PC-9 (cell line): ENCODE measurements at regions of chr1 and their contacts with region 1.

Region 1: GRCh38 chr1:248906009-248906752 is at the start of gene PGBD2:
- DNase-seq: peak; percentile 66 to 91
- H3K4me3 ChIP-seq: peak within 1 kb of the TSS; percentile 74
- H3K27ac ChIP-seq: peak within 1 kb of the TSS; percentile 63
- H3K4me1 ChIP-seq: no peaks in the 10 kb centered on the region
- H3K27me3 ChIP-seq: 0 out of 2 replicates have a peak, but pooled peaks cover 1% of the 10 kb centered on the region
- CTCF ChIP-seq: peak; percentile 73
- total RNA-seq, gene PGBD2: 5.3 and 5.6 TPM in 2 replicates

Region 2: DNA sequence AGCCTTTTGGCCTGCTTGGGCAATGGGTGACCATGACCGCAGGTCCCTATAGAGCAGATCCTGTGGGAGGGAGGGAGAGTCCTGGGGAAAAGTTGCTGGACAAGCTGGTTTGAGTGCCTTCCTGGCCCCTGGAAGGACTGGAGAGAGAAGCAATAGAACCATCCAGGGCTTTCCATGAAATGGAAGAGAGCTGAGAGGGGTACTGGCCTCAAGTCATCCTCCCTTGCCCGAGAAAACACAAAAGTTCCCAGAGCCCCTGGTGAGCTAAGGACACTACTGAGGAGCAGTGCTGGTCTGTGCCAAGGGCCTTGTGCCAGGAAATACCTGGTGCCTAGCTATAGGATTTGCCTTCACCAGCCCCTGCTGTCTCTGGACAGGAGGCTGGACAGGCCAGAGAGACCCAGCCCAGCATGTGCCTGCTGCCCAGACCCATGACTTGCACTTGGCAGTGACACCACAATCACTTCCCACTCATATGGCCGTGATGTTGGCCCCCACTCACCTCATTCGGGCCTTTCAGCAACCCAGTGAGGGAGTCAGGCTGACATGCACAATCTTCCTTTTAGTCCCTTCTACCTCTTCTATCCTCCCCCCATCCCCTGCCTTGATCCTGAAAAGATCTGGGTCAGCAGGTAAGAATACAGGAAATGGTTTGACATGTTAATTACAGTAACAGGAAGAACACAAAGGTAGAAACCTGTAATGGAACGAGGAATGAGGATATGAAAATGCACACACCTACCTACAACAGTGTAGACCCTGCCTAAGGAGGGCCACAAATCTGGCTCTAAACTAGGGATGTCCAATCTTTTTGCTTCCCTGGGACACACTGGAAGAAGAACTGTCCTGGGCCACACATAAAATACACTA is 87.4 kb before region 1 on chr1:
- CTCF ChIA-PET with region 1: no interaction called
- POLR2A ChIA-PET with region 1: no interaction called
- intact Hi-C with region 1: no loop called
- DNase-seq: no peak
- H3K4me3 ChIP-seq: no peak overlapping the region
- H3K27ac ChIP-seq: no peak overlapping the region
- H3K4me1 ChIP-seq: no peaks in the 10 kb centered on the region
- H3K27me3 ChIP-seq: no peaks in the 10 kb centered on the region
- CTCF ChIP-seq: no peak

Region 3: DNA sequence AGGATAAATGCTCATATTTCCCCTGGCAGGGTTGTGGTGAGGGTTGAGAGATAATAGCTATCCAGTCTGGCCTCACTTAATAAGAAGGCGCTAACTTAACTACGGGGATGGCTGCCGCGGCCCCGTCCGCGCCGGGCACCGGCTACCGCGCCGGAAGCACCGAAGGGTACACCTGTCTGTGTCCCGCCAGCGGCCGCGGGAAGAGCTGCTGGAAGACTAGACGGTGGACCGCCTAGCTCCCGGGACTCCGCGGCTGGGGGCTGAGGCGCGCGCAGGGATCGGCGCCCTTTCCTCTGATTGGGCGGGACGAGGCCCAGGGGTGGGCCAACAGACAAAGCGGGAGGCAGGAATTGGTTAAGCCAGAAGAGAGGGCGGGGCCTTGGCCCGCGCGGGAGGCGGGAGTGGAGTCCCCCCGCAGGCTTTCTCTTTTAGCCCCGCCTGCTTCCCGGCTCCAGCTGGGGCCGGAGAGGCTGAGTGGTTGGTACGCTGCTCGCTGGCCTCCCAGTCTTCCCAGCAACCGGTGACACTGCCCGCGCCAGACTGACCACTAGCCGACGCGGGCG is 68.3 kb before region 1 on chr1 and contains the start of gene ZNF672:
- CTCF ChIA-PET with region 1: no interaction called
- POLR2A ChIA-PET with region 1: no interaction called
- intact Hi-C with region 1: loop called (anchors 2 kb)
- DNase-seq: peak; percentile 85 to 98
- H3K4me3 ChIP-seq: peak within 1 kb of the TSS; percentile 83
- H3K27ac ChIP-seq: peak within 1 kb of the TSS; percentile 88
- H3K4me1 ChIP-seq: peaks cover 11% of the 10 kb centered on the region; the same call in 1 of the 2 replicates
- H3K27me3 ChIP-seq: no peaks in the 10 kb centered on the region
- CTCF ChIP-seq: no peak
- total RNA-seq, gene ZNF672: 24.7 and 27.6 TPM in 2 replicates

Region 4: GRCh38 chr1:248858891-248859889 is 47.0 kb before region 1 on chr1 and contains the start of gene ZNF692:
- CTCF ChIA-PET with region 1: no interaction called
- POLR2A ChIA-PET with region 1: interaction called, 9 read pairs
- intact Hi-C with region 1: loop called (anchors 1 kb)
- DNase-seq: peak; percentile 75 to 95
- H3K4me3 ChIP-seq: peak within 1 kb of the TSS; percentile 75
- H3K27ac ChIP-seq: peak within 1 kb of the TSS; percentile 72
- H3K4me1 ChIP-seq: peaks cover 16% of the 10 kb centered on the region
- H3K27me3 ChIP-seq: no peaks in the 10 kb centered on the region
- CTCF ChIP-seq: no peak
- total RNA-seq, gene ZNF692: 46.6 and 51.7 TPM in 2 replicates

Region 5: DNA sequence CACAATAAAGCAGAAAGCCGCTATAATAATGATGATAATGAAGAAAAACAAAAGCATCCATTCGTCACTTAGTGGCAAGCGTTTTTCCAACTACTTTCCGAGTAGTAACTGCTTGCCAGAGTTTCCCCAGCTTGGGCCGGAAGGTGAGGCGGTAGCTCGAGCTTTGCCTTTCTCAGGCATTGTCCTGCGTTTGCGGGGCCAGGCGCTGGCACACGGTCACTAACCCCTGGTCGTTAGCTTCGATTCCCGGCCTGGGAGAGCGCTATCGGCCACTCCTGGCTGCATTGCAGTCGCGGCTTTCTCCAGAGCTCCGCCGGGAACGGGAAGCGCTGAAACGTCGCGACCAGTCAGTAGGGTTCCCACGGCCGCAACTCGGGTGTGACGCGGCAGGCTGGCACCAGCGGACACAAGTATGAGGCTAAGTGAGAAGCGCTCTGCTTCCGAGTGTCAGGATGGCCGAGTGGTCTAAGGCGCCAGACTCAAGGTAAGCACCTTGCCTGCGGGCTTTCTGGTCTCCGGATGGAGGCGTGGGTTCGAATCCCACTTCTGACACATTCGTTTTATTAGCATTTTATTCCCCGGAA is 32.7 kb before region 1 on chr1:
- CTCF ChIA-PET with region 1: interaction called, 4 read pairs
- POLR2A ChIA-PET with region 1: no interaction called
- intact Hi-C with region 1: loop called (anchors 1 kb)
- DNase-seq: peak; percentile 89 to 98
- H3K4me3 ChIP-seq: peak overlapping the region; percentile 75
- H3K27ac ChIP-seq: peak overlapping the region; percentile 83
- H3K4me1 ChIP-seq: peaks cover 10% of the 10 kb centered on the region
- H3K27me3 ChIP-seq: no peaks in the 10 kb centered on the region
- CTCF ChIP-seq: no peak